Calu3 (cell line): ENCODE measurements at regions of chr10 and their contacts with region 1.

Region 1: GRCh38 chr10:14588084-14588937 is 186.4 kb downstream of the FAM107B start:
- DNase-seq: peak; percentile 50
- H3K4me3 Mint-ChIP-seq: peak overlapping the region; percentile 46
- H3K27ac Mint-ChIP-seq: peak overlapping the region; percentile 70
- H3K4me1 Mint-ChIP-seq: peaks cover 74% of the 10 kb centered on the region
- H3K27me3 Mint-ChIP-seq: no peaks in the 10 kb centered on the region
- CTCF ChIP-seq: no peak

Region 2: DNA sequence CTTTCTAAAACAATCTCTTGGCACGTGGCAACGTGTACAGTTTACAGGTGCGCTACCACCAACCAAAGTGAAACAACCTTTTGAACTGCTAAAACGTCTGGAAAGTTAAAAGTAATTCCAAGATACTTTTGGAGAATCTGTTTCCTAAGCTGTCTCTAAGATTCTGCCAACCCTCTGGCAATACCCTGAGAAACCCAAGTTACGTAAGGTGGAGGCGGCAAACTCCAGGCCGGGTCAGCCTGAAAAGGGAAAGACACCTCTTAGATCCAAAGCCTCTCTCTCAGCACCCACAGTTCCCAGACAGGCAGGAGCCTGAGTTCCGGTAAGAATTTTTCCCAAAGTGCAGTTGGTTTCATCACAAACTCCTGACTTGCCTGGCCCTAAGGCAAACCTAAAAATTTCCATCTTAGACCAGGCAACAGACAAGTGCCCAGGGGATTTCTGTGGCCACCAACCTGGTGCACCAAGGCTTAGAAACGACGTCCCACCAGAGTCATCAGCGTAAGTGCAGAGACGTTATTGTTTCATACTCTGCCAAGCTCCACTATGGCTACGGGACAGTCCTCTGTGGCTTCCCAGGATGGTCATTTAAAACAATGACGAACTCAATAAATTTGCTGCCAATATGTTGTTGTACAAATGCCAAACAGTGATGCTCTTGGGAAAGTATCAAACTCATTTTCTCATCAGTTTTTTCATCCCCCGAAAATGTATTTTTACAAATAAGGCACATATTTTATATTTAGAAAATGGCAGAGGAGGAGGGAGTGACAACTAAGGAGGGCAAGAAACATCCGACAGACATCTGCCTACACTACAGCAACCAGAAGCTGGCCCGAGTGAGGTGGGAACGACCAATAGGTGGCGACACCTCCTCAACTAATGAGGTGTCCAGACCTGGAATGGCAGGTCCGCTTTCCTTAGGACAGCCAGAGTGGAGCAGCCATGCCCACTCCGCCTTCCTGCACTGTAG is 51.8 kb before region 1 on chr10:
- CTCF ChIA-PET with region 1: no interaction called
- intact Hi-C with region 1: loop called (anchors 5 kb)
- DNase-seq: peak; percentile 75
- H3K4me3 Mint-ChIP-seq: no peak overlapping the region
- H3K27ac Mint-ChIP-seq: no peak overlapping the region
- H3K4me1 Mint-ChIP-seq: peaks cover 44% of the 10 kb centered on the region
- H3K27me3 Mint-ChIP-seq: no peaks in the 10 kb centered on the region
- CTCF ChIP-seq: peak; percentile 53

Region 3: GRCh38 chr10:14571866-14572507 is 16.3 kb before region 1 on chr10:
- CTCF ChIA-PET with region 1: no interaction called
- intact Hi-C with region 1: no loop called
- DNase-seq: peak; percentile 73
- H3K4me3 Mint-ChIP-seq: peak overlapping the region; percentile 20
- H3K27ac Mint-ChIP-seq: peak overlapping the region; percentile 83
- H3K4me1 Mint-ChIP-seq: peaks cover 34% of the 10 kb centered on the region
- H3K27me3 Mint-ChIP-seq: no peaks in the 10 kb centered on the region
- CTCF ChIP-seq: no peak

Region 4: GRCh38 chr10:14705548-14706230 is 117.4 kb after region 1 on chr10:
- CTCF ChIA-PET with region 1: no interaction called
- intact Hi-C with region 1: no loop called
- DNase-seq: no peak
- H3K4me3 Mint-ChIP-seq: no peak overlapping the region
- H3K27ac Mint-ChIP-seq: no peak overlapping the region
- H3K4me1 Mint-ChIP-seq: peaks cover 17% of the 10 kb centered on the region
- H3K27me3 Mint-ChIP-seq: no peaks in the 10 kb centered on the region
- CTCF ChIP-seq: no peak

Region 5: DNA sequence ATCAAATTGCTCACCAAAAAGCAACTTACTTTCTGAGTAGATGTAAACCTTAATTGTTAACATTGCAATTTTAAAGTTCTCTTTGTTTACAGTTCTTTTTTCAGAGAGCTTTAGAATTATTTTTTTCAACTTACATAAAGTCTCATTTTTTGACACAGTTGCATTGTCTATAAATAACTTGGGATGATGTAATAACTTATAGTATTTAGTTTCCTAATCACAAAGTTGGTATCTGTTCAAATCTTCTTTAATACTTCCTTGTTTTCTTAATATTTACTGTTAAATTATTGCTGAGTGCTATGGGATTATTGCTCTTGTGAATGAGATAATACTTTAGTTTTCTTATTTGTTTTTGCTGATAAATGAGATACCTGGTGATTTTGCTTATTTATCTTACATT is 271.5 kb after region 1 on chr10:
- CTCF ChIA-PET with region 1: interaction called, 13 read pairs
- intact Hi-C with region 1: no loop called
- DNase-seq: no peak
- H3K4me3 Mint-ChIP-seq: no peak overlapping the region
- H3K27ac Mint-ChIP-seq: peak overlapping the region; percentile 31
- H3K4me1 Mint-ChIP-seq: peaks cover 14% of the 10 kb centered on the region
- H3K27me3 Mint-ChIP-seq: no peaks in the 10 kb centered on the region
- CTCF ChIP-seq: no peak